Transverse colon (tissue), 4 donors: ENCODE measurements at regions of chr3 and their contacts with region 1.

Region 1: GRCh38 chr3:18444595-18445400 is 19.7 kb upstream of the SATB1 start:
- DNase-seq: peak; percentile 77
- H3K4me3 ChIP-seq: peak overlapping the region; percentile 59 to 73 (median 71)
- H3K27ac ChIP-seq: peak overlapping the region; percentile 80 to 87 (median 83)
- H3K4me1 ChIP-seq: peaks cover 0 to 36% (median 21%) of the 10 kb centered on the region in 4 donors
- H3K27me3 ChIP-seq: no peaks in the 10 kb centered on the region
- CTCF ChIP-seq: peak in 3 of 5 experiments; percentile 7 to 37 (median 28)
- EP300 ChIP-seq: no peak
- POLR2A ChIP-seq: no peak

Region 2: DNA sequence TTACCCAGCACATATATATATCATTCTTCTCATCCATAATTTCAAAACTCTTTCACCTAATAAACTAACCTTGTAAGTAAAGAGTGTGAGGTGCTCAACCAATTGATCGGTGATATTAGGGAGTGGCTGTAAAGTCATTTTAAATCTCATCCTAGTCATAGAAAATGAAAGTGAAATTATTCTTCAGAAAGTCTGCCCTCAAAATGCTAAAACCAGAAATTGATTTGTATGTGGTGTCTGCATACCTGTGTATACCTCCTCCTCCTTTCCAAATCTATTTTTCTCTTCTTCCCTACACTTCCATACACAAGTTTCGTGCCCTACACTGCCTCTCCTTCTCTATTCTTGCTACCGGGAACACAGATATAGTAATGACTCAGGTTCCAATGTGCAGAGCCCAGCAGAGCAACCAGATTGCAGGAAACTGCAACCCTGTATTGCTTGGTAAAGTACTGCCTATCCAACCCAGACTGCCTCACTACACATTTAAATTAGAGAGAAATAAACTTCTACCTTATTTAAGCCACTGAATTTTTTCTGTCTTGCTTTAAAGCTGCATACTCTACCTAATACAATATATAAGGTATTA is 695.0 kb before region 1 on chr3:
- in situ Hi-C with region 1: no loop called
- intact Hi-C with region 1: loop called (anchors 5 kb)
- DNase-seq: peak; percentile 15
- H3K4me3 ChIP-seq: peak overlapping the region in 1 of 4 donors; percentile 13
- H3K27ac ChIP-seq: no peak overlapping the region
- H3K4me1 ChIP-seq: no peaks in the 10 kb centered on the region
- H3K27me3 ChIP-seq: no peaks in the 10 kb centered on the region
- CTCF ChIP-seq: no peak
- EP300 ChIP-seq: no peak
- POLR2A ChIP-seq: no peak

Region 3: GRCh38 chr3:18531662-18532236 is 87.0 kb after region 1 on chr3:
- in situ Hi-C with region 1: no loop called
- intact Hi-C with region 1: no loop called
- DNase-seq: no peak
- H3K4me3 ChIP-seq: no peak overlapping the region
- H3K27ac ChIP-seq: no peak overlapping the region
- H3K4me1 ChIP-seq: no peaks in the 10 kb centered on the region
- H3K27me3 ChIP-seq: no peaks in the 10 kb centered on the region
- CTCF ChIP-seq: no peak
- EP300 ChIP-seq: no peak
- POLR2A ChIP-seq: no peak

Region 4: GRCh38 chr3:18837137-18837755 is 392.4 kb after region 1 on chr3:
- in situ Hi-C with region 1: no loop called
- intact Hi-C with region 1: no loop called
- DNase-seq: no peak
- H3K4me3 ChIP-seq: no peak overlapping the region
- H3K27ac ChIP-seq: no peak overlapping the region
- H3K4me1 ChIP-seq: no peaks in the 10 kb centered on the region
- H3K27me3 ChIP-seq: no peaks in the 10 kb centered on the region
- CTCF ChIP-seq: no peak
- EP300 ChIP-seq: no peak
- POLR2A ChIP-seq: no peak